Sigmoid colon (tissue), 7 donors: ENCODE measurements at regions of chr15 and their contacts with region 1.

Region 1: DNA sequence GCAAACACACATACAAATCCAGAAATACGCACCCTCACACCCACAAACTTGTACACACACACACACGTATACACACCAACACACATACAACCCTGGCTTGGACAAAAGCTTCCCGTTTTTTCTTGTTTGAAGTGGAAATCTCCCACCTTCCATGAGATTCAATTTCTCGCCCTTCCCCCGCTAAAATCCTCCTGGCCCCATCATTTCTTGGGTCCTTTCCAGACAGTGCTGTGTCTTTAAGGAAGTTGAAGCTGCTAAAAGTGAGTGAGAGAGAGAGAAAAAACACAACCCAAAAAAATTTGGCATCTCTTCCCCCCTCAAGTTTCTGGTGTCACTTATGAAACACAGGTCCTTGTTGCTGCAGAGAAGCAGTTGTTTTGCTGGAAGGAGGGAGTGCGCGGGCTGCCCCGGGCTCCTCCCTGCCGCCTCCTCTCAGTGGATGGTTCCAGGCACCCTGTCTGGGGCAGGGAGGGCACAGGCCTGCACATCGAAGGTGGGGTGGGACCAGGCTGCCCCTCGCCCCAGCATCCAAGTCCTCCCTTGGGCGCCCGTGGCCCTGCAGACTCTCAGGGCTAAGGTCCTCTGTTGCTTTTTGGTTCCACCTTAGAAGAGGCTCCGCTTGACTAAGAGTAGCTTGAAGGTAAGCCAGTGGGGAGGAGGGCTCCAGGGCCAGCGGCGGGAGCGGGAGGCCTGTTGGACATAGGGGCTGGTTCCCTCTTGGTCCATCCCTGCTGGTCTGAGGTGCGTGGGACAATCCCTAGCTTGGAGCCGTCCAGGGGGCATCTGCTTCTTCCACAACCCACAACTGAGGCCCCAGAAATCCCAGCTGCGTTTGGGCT is at the start of gene ISLR:
- DNase-seq: peak; percentile 86
- H3K4me3 ChIP-seq: peak within 1 kb of the TSS; percentile 40 to 51 (median 50)
- H3K27ac ChIP-seq: peak within 1 kb of the TSS; percentile 78 to 89 (median 84)
- H3K4me1 ChIP-seq: peaks cover 0 to 72% (median 62%) of the 10 kb centered on the region in 4 donors
- H3K27me3 ChIP-seq: no peaks in the 10 kb centered on the region
- CTCF ChIP-seq: no peak
- EP300 ChIP-seq: no peak
- POLR2A ChIP-seq: peak in 1 of 2 donors; percentile 26
- total RNA-seq, gene ISLR: 71.4 to 186 (median 121) TPM

Region 2: DNA sequence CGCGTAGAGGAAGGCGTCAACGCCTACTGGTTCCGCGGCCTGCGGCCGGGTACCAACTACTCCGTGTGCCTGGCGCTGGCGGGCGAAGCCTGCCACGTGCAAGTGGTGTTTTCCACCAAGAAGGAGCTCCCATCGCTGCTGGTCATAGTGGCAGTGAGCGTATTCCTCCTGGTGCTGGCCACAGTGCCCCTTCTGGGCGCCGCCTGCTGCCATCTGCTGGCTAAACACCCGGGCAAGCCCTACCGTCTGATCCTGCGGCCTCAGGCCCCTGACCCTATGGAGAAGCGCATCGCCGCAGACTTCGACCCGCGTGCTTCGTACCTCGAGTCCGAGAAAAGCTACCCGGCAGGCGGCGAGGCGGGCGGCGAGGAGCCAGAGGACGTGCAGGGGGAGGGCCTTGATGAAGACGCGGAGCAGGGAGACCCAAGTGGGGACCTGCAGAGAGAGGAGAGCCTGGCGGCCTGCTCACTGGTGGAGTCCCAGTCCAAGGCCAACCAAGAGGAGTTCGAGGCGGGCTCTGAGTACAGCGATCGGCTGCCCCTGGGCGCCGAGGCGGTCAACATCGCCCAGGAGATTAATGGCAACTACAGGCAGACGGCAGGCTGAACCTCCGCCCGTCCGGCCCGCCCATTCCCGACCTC is 39.1 kb before region 1 on chr15:
- intact Hi-C with region 1: loop called (anchors 2 kb)
- DNase-seq: peak; percentile 73
- H3K4me3 ChIP-seq: no peak overlapping the region
- H3K27ac ChIP-seq: no peak overlapping the region
- H3K4me1 ChIP-seq: peaks cover 0 to 64% (median 52%) of the 10 kb centered on the region in 4 donors
- H3K27me3 ChIP-seq: peaks cover 62 to 100% (median 91%) of the 10 kb centered on the region in 3 donors
- CTCF ChIP-seq: peak in 3 of 4 experiments; percentile 11 to 41 (median 35)
- EP300 ChIP-seq: no peak
- POLR2A ChIP-seq: no peak

Region 3: DNA sequence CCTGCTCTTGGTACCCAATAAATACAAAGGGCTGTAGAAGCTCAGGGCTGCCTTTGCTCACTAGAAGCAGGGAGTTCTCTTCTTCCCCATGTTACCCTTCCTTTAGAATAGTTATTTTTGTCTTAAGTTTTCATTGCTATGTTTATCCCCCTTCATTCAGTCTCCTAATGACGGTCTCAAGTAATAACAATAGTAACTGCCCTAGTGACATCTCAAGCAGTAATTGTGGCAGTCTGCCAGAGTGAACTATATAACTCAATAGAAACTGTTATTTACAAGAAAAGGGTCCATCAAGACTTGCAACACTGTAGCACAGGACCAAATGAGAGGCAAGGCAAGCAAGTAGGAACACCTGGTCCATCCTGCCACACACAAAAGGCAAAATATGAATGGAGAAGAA is 1310.4 kb after region 1 on chr15:
- intact Hi-C with region 1: no loop called
- DNase-seq: no peak
- H3K4me3 ChIP-seq: no peak overlapping the region
- H3K27ac ChIP-seq: no peak overlapping the region
- H3K4me1 ChIP-seq: no peaks in the 10 kb centered on the region
- H3K27me3 ChIP-seq: no peaks in the 10 kb centered on the region
- CTCF ChIP-seq: no peak
- EP300 ChIP-seq: no peak
- POLR2A ChIP-seq: no peak